ENCODE measurements at regions of chr12 and their contacts with region 1.

Region 1: DNA sequence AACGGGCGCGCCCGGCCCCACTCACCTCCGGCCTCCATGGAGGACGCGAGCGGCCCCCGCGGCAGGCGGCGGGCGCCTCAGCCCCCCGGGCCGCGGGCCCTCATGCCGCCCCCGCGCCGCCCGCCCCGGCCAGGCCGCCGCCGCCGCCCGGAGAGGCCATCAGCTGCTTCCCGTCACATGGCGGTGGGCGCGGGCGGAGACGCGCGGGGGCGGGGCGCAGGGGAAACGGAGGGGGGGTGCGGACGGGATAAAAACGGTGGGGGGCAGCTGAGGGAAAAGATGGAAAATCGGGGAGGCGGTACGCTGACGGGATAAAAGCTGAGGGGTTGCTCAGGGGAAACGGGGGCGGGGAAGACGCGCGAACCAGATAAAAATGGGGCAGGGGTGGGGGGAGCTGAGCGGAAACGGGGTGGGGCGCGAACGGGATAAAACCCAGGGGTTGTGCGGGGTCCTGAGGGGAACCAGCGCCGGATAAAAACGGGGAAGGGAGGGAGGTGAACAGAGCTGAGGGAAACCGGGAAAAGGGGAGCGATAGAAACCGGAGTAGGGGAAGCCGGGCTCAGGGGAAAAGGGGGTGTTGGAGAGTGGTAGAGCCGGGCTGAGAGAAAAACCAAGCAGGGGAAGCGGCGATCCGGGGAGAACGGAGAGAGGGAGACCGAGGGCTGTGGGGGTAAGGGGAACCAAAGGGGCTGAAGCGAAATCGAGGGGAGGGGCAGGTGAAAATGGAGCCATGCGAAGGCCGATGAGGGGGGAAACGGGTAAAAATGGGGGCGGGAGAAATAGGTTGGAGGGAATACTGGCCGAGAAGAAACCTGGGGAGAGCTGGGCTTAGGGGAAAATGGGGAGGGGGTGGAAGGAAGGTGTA is at the start of gene WSB2:
- DNase-seq: peak; percentile 83 to 91 (median 89)
- ATAC-seq: peak; percentile 50 to 81 (median 75)
- H3K4me3 ChIP-seq: peak within 1 kb of the TSS; percentile 57 to 99 (median 79)
- H3K27ac ChIP-seq: peak within 1 kb of the TSS; percentile 93 to 100 (median 98)
- H3K4me1 ChIP-seq: peaks cover 0 to 61% (median 31%) of the 10 kb centered on the region in 12 donors
- H3K27me3 ChIP-seq: no peaks in the 10 kb centered on the region
- CTCF ChIP-seq: no peak
- POLR2A ChIP-seq: no peak
- total RNA-seq, gene WSB2: 89.1 to 162 (median 105) TPM

Region 2: DNA sequence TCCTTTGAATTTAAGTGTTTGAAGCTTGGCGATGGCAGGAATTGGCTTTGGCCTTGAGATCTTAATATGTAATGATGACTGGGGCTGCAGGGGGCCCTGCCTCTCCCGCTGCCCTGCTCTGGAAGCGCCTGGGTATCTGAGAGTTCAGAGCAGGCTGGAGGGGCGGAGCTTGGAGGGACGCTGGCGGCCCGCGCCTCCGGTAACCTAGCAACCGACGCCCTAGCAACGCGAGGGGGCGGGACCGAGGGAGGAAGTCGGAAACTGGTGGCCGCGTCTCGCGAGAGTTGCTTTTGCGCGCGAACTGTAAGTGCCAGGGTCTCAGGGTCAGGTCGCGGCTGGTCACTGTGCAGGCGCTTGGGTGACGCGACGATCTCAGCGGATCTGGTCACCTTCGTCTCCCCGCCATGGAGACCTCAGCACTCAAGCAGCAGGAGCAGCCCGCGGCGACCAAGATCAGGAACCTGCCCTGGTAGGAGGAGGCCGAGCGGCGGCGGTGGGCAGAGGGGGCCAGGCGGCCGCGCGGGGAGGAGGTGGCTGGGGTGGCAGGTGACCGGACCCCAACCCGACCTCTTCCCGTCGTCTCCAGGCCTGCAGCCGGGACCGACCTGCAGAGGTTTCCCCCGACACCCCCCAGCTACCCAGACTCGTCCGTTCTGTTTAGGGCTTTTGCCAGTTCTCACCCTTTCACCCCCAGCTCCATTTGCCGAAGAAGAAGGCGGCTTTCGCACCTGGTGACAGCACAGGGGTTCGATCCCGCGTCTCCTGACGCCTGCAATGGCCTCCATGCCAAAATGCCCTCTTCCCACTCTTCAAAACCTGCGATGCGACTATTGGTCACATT is 44.6 kb before region 1 on chr12 and contains the start of gene RFC5:
- intact Hi-C with region 1: loop called in 4 of 10 experiments (anchors 2 to 5 kb)
- DNase-seq: peak; percentile 98 to 99 (median 99)
- ATAC-seq: peak; percentile 99 to 100 (median 100)
- H3K4me3 ChIP-seq: peak within 1 kb of the TSS; percentile 73 to 99 (median 88)
- H3K27ac ChIP-seq: peak within 1 kb of the TSS in 7 of 12 donors; percentile 5 to 73 (median 55)
- H3K4me1 ChIP-seq: peaks cover 0 to 19% (median 10%) of the 10 kb centered on the region in 12 donors
- H3K27me3 ChIP-seq: no peaks in the 10 kb centered on the region
- CTCF ChIP-seq: peak in 1 of 12 donors; percentile 4
- POLR2A ChIP-seq: peak in 1 of 2 donors; percentile 20
- total RNA-seq, gene RFC5: 3.5 to 6.9 (median 4.7) TPM

Region 3: DNA sequence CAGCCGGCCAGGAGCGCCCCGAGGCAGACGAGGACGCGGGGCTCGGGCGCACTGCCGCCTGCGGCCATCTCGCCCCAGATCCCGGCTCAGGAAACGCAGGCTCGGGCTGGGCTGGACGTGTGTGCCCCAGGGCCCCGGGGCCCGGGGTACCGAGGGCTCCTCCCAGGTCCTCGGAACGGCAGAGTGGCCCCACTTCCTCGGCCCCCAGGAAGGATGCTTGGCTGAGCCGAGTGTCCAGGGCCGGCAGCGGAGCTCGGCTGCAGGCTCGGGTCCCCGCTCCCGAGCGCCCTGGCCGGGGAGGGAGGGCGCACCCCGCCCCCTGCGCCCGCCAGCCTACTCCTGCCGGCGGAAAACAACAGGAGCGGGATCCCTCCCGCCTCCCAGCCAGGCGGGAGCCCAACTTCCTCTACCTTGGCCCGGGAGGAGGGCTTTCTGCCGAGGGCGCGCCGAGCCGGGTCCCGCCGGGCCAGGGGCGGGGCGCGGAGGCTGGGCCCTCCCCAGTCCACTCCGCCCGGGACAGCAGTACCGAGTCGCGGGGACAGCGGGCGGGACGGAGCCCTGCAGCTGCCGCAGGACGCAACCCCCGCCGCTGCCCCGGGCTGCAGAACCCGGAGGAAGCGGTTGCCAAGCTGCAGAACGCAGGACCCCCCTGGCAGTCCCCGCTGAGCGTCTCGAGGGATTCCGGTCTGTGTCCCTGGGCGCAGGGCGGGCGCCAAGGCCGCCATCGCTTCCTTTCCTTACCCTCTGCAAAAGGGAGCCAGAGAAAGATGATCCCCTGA is 42.5 kb after region 1 on chr12 and contains the start of gene VSIG10:
- intact Hi-C with region 1: loop called in 7 of 10 experiments (anchors 2 to 5 kb)
- DNase-seq: peak; percentile 75 to 89 (median 76)
- ATAC-seq: peak; percentile 75 to 97 (median 94)
- H3K4me3 ChIP-seq: peak within 1 kb of the TSS; percentile 60 to 99 (median 86)
- H3K27ac ChIP-seq: peak within 1 kb of the TSS; percentile 25 to 88 (median 78)
- H3K4me1 ChIP-seq: peaks cover 0 to 19% (median 9%) of the 10 kb centered on the region in 12 donors
- H3K27me3 ChIP-seq: no peaks in the 10 kb centered on the region
- CTCF ChIP-seq: peak in 1 of 12 donors; percentile 6
- POLR2A ChIP-seq: peak in 1 of 2 donors; percentile 84
- total RNA-seq, gene VSIG10: 6.9 to 17.7 (median 10.7) TPM